RWPE1 (cell line): ENCODE measurements at regions of chr4 and their contacts with region 1.

Region 1: GRCh38 chr4:40924096-40924792 is 174.5 kb downstream of the NSUN7 start:
- DNase-seq: peak; percentile 62
- H3K27ac ChIP-seq: peak overlapping the region; percentile 21; the same call in 1 of the 2 replicates
- CTCF ChIP-seq: peak; percentile 91

Region 2: GRCh38 chr4:40865696-40866095 is 58.5 kb before region 1 on chr4:
- CTCF ChIA-PET with region 1: no interaction called
- POLR2A ChIA-PET with region 1: no interaction called
- DNase-seq: no peak
- H3K27ac ChIP-seq: no peak overlapping the region
- CTCF ChIP-seq: no peak

Region 3: GRCh38 chr4:40908702-40909362 is 15.4 kb before region 1 on chr4:
- CTCF ChIA-PET with region 1: interaction called, 11 read pairs
- POLR2A ChIA-PET with region 1: no interaction called
- DNase-seq: peak; percentile 44
- H3K27ac ChIP-seq: peak overlapping the region; percentile 82
- CTCF ChIP-seq: peak; percentile 80